ENCODE measurements at regions of chr7 and their contacts with region 1.

Region 1: DNA sequence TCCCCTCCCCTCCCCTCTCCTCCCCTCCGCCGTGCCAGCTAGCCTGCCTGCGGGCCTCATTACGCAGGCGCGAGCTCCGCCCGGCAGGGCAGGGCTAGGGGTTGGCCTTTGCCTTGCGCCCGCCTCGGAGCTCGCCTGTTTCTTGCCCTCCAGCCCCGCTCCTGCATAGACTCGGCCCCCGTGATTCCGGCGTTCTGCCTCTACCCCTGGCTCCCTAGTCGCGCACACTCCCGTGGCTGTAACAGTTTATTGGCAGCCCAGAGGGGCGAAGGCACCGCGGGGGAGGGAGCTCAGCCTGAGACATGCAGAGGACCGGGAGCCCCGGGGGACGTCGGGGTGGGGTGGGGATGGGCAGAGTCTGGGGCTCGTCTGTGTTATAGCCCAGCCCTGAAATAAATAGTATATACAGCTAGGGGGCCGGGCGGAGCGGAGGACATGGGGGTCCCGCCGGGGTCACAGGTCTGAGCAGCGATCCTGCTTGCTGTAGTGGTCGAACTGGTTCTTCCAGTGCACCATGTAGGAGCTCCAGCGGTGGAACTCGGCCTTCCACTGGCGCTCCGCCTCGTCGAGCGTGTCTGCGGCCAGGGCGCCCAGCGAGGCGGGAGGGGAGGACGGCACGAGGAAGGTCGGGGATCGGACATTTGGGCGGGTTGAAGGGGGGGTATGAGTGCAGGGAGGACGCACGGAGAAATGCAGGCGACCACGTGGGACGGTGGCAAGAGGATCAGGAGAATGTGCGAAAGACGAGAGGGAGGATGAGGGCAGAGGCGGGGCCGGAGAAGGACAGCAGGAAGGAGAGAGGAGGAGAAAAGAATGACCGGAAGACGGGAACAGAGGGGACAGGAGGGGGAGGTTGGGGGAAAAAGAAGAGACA is 483 bp upstream of the UFSP1 start:
- DNase-seq: peak; percentile 79 to 92
- H3K4me3 ChIP-seq: peak overlapping the region; percentile 65 to 91 (median 72)
- H3K27ac ChIP-seq: peak overlapping the region; percentile 86
- H3K4me1 ChIP-seq: peaks cover 0 to 21% (median 7%) of the 10 kb centered on the region in 4 experiments; a peak in 6 of 7 replicates
- H3K27me3 ChIP-seq: peaks cover 0 to 12% (median 3%) of the 10 kb centered on the region in 4 experiments; a peak in 5 of 7 replicates
- CTCF ChIP-seq: no peak
- EP300 ChIP-seq: no peak
- POLR2A ChIP-seq: no peak
- RAD21 ChIP-seq: no peak

Region 2: DNA sequence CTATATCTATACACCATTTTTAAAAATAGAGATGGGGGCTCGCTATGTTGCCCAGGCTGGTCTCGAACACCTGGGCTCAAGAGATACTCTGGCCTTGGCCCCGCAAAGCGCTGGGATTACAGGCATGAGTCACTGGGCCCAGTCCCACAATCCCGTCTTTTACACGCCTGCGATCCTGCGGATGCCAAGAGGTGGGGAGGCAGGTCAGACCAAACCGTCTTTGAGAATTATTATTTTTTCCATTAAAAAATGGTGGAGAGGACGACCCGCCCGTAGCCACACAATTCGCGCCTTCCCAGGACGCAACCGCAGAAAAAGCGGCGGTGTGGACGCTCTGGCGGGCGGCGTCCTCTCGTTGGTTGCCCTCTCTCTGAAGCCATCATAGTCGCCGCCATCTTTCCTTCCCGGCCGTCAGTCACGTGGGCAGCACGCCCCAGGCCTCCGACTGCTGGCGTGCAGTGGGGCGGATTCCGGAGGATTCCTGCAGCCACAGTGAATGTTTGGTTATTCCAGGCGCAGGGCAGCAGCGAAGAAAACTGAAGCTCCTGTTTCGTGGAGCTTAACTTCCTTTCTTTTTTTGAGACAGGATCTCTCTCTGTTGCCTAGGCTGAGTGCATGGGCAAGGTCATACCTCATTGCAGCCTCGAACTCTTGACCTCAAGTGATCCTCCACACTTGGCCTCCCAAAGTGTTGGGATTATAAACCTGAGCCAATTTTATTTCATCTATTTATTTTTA is 52.7 kb before region 1 on chr7:
- CTCF ChIA-PET with region 1: no interaction called
- POLR2A ChIA-PET with region 1: interaction called, 14 read pairs
- DNase-seq: peak; percentile 83 to 88
- H3K4me3 ChIP-seq: peak overlapping the region; percentile 29 to 67 (median 56)
- H3K27ac ChIP-seq: peak overlapping the region; percentile 94
- H3K4me1 ChIP-seq: peaks cover 3 to 10% (median 8%) of the 10 kb centered on the region in 4 experiments
- H3K27me3 ChIP-seq: no peaks in the 10 kb centered on the region
- CTCF ChIP-seq: no peak
- EP300 ChIP-seq: no peak
- POLR2A ChIP-seq: no peak; a peak in 1 of 3 replicates
- RAD21 ChIP-seq: no peak

Region 3: DNA sequence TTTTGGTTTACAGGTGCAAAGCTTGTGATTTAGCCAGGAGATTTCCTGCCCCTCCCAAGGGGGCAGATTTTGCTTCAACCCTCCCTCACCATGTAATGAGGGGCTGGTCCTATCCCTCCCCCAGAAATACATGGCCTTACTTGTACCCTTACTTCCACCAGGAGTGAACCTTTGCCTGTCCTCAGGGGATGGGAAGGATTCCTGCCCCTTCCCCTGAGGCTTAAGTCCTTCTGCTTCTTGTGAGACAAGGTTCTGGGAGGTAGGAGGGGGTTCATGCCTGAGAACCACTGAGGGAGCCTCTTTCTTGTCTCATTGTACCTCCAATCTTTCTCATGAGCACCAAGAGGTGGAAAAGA is 39.8 kb after region 1 on chr7:
- CTCF ChIA-PET with region 1: no interaction called
- POLR2A ChIA-PET with region 1: no interaction called
- DNase-seq: no peak
- H3K4me3 ChIP-seq: no peak overlapping the region
- H3K27ac ChIP-seq: peak overlapping the region; percentile 58; the same call in 1 of the 2 replicates
- H3K4me1 ChIP-seq: peaks cover 7 to 14% (median 11%) of the 10 kb centered on the region in 4 experiments
- H3K27me3 ChIP-seq: no peaks in the 10 kb centered on the region
- CTCF ChIP-seq: no peak
- EP300 ChIP-seq: no peak
- POLR2A ChIP-seq: 0 out of 3 replicates have a peak, but pooled peaks of 1 of the 2 experiments have one; percentile 9
- RAD21 ChIP-seq: no peak

Region 4: DNA sequence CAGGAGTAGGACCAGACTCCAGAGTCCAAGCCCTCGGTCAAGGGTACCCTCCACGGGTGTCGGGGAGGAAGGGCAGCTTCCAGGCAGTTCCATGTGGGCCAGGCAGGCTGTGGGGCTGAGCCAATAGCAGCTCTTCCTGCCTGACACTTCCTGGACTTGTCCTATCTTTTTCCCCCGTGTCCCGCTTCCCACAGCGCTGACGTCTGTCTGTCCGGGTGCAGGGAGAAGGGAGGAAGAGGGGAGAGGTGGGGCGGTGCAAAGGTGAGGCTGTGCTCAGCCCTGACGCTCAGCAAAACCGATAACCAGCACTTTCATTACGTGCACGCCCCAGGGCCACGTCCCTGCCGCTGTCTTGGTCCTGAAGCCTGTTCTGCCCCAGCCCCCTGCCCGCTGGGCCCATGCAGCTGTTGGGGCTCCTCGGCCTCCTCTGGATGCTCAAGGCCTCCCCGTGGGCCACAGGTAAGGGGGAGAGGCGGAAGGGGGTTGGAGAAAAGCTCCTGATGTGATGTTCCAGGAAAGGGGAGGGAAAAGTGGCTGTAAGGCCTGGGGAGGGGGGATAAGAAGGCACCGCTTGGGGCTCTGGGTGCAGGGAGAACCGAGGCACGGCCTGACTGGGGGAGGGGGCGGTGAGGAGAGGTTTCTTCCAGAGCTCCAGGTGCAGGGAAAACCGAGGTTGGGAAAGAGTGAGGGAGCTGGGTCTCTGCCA is 59.4 kb after region 1 on chr7 and contains the start of gene MUC3A:
- CTCF ChIA-PET with region 1: interaction called, 14 read pairs
- POLR2A ChIA-PET with region 1: interaction called, 8 read pairs
- DNase-seq: peak in 1 of 2 experiments; percentile 66
- H3K4me3 ChIP-seq: peak within 1 kb of the TSS in 1 of 4 experiments; percentile 41; a peak in 3 of 8 replicates
- H3K27ac ChIP-seq: no peak within 1 kb of the TSS
- H3K4me1 ChIP-seq: peaks cover 9 to 33% (median 27%) of the 10 kb centered on the region in 4 experiments
- H3K27me3 ChIP-seq: peaks cover 0 to 3% (median 0%) of the 10 kb centered on the region in 4 experiments; a peak in 3 of 7 replicates
- CTCF ChIP-seq: no peak
- EP300 ChIP-seq: no peak
- POLR2A ChIP-seq: no peak
- RAD21 ChIP-seq: no peak
- total RNA-seq, gene MUC3A: 43.9 and 44.6 TPM in 2 replicates

Region 5: DNA sequence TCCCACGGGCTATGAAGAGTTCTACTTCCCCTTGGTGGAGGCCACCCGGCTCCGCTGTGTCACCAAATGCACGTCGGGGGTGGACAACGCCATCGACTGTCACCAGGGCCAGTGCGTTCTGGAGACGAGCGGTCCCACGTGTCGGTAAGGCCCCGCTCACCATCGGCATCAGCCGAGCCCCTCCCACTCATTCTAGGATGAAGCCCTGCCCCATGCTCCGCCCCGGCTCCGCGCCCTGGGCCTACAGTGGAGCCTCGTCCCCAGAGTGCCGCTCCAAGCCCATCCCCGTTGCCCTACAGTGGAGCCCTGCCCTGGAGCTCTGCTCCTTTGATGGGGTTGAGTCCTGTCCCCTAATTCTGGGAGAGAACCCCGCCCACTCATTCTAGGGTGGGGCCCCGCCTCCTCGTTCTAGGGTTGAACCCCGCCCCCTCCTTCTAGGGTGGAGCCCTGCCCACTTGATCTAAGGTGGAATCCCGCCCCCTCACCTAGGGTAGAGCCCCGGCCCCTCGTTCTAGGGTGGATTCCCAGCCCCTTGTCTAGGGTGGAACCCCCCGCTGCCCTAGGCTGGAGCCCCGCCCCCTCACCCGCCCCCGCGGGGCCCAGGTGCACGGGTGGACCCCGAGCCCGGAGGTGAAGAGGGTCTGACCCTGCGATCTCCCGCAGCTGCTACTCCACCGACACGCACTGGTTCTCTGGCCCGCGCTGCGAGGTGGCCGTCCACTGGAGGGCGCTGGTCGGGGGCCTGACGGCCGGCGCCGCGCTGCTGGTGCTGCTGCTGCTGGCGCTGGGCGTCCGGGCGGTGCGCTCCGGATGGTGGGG is 75.9 kb after region 1 on chr7:
- CTCF ChIA-PET with region 1: interaction called, 4 read pairs
- POLR2A ChIA-PET with region 1: interaction called, 15 read pairs
- DNase-seq: peak; percentile 97 to 100
- H3K4me3 ChIP-seq: peak overlapping the region; percentile 36 to 79 (median 60)
- H3K27ac ChIP-seq: no peak overlapping the region
- H3K4me1 ChIP-seq: peaks cover 4 to 32% (median 26%) of the 10 kb centered on the region in 4 experiments
- H3K27me3 ChIP-seq: peaks cover 3 to 18% (median 14%) of the 10 kb centered on the region in 4 experiments
- CTCF ChIP-seq: peak in 2 of 3 experiments; percentile 96 to 98; a peak in 3 of 4 replicates
- EP300 ChIP-seq: peak in 1 of 2 experiments; percentile 69; a peak in 1 of 3 replicates
- POLR2A ChIP-seq: no peak
- RAD21 ChIP-seq: peak; percentile 79 to 92

Region 6: DNA sequence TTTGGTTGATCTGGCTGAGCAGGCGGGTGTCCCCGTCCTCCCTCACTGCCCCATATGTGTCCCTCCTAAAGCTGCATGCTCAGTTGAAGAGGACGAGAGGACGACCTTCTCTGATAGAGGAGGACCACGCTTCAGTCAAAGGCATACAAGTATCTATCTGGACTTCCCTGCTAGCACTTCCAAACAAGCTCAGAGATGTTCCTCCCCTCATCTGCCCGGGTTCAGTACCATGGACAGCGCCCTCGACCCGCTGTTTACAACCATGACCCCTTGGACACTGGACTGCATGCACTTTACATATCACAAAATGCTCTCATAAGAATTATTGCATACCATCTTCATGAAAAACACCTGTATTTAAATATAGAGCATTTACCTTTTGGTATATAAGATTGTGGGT is 168.4 kb after region 1 on chr7:
- CTCF ChIA-PET with region 1: interaction called, 21 read pairs
- POLR2A ChIA-PET with region 1: no interaction called
- DNase-seq: peak in 1 of 2 experiments; percentile 88
- H3K4me3 ChIP-seq: no peak overlapping the region
- H3K27ac ChIP-seq: no peak overlapping the region
- H3K4me1 ChIP-seq: no peaks in the 10 kb centered on the region
- H3K27me3 ChIP-seq: peaks cover 0 to 2% (median 0%) of the 10 kb centered on the region in 4 experiments; a peak in 1 of 7 replicates
- CTCF ChIP-seq: no peak
- EP300 ChIP-seq: no peak
- POLR2A ChIP-seq: no peak
- RAD21 ChIP-seq: 0 out of 4 replicates have a peak, but pooled peaks of 1 of the 2 experiments have one; percentile 3

Region 7: GRCh38 chr7:101077303-101078089 is 187.5 kb after region 1 on chr7:
- CTCF ChIA-PET with region 1: interaction called, 17 read pairs
- POLR2A ChIA-PET with region 1: no interaction called
- DNase-seq: peak; percentile 89 to 98
- H3K4me3 ChIP-seq: no peak overlapping the region
- H3K27ac ChIP-seq: no peak overlapping the region
- H3K4me1 ChIP-seq: no peaks in the 10 kb centered on the region
- H3K27me3 ChIP-seq: no peaks in the 10 kb centered on the region
- CTCF ChIP-seq: peak; percentile 94 to 98 (median 96)
- EP300 ChIP-seq: peak in 1 of 2 experiments; percentile 54; a peak in 1 of 3 replicates
- POLR2A ChIP-seq: no peak
- RAD21 ChIP-seq: peak; percentile 97

Region 8: GRCh38 chr7:101664436-101664835 is 774.4 kb after region 1 on chr7:
- CTCF ChIA-PET with region 1: no interaction called
- POLR2A ChIA-PET with region 1: no interaction called
- DNase-seq: peak; percentile 66 to 70
- H3K4me3 ChIP-seq: peak overlapping the region in 1 of 4 experiments; percentile 25; a peak in 1 of 8 replicates
- H3K27ac ChIP-seq: no peak overlapping the region
- H3K4me1 ChIP-seq: peaks cover 0 to 13% (median 7%) of the 10 kb centered on the region in 4 experiments; a peak in 6 of 7 replicates
- H3K27me3 ChIP-seq: no peaks in the 10 kb centered on the region
- CTCF ChIP-seq: no peak
- EP300 ChIP-seq: no peak
- POLR2A ChIP-seq: no peak
- RAD21 ChIP-seq: no peak